ENCODE measurements at regions of chr18 and their contacts with region 1.

Region 1: GRCh38 chr18:50281295-50281971 is at the start of gene MBD1:
- DNase-seq: peak; percentile 94 to 99 (median 98)

Region 2: DNA sequence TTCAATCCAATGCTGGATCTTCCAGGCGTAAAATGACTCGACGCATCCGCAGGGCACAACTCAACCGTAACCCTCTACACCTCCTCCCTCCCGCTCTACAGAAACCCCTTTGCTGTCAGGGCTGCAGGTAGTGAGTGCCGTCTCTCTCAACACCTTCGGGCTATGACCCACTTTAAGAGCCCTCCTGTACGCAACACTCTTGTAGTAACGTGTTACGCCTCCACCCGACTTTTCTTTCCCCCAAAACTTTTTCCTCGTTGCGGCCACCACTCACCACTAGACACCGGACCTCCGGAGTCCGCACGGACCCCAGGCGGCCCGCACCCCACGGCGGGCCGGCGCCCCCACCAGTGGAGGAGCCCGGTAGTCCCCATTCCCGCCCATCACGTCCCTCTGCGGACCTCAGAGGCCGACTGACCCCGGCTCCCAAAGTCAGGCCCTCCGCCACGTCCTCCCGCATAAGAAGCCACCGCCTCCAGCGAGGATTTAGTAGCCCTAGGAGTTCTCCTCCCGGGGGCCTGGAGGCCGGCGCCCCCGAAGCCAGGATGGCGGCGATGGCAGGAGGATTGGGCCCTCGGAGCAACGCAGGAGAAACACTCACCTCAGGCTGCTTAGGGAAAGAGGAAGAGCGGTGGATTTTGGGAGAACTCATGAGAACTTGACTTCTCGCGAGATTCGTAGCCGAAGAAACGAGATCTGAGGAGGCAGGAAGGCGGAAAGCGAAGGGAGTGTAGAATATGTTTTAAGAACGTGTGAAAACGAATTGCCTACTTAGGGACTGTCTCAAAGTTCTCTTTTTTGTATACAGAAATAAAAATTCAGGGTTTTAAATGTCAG is 789.4 kb before region 1 on chr18:
- intact Hi-C with region 1: loop called (anchors 10 kb)
- DNase-seq: peak; percentile 51 to 97 (median 87)

Region 3: GRCh38 chr18:50374753-50375391 is 93.4 kb after region 1 on chr18 and contains the start of gene SKA1:
- intact Hi-C with region 1: loop called (anchors 5 kb)
- DNase-seq: peak; percentile 78 to 96 (median 92)

Measured in head of caudate nucleus (tissue), 42 donors.